ENCODE measurements at regions of chrX and their contacts with region 1.

Region 1: DNA sequence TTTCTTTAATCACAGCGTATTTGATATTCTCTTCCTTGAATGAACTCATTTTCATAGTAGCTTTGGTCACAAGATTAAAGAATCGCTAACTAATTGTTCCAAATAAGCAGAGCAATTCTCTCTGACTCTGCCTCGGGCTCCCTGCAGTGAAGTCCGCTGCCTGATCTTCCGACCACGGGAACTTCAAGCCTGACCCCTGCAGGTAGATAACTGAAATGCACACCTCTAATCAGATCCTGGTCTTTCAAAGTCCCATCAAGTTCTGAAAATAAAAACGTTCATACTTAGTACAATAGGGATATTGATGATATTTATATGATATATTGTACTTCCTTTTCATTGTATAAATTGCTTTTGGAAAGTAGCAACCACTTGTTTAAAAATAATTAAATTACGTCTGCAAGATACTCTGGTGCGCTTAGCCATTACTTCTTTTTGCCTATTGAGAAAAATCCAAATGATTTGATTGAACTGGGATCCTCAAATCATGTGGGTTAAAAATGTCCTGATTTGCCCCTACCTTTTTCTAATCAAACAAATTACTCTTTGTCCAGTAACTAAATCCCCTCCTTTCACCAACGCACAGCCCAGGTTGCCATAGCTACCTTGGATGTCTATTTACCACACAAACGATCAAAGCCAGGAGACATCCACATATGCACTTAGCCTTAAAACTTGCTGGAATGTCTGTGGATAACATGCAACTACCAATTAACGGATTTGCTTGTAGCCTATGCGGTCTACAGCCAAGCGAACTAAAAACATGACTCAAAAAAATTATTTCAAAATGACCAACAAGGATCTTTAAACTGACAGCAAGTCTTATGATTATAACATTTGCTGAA is 4.2 kb downstream of the MID1 start:
- DNase-seq: peak in 1 of 2 donors; percentile 47
- ATAC-seq: peak; percentile 71
- H3K4me3 ChIP-seq: no peak overlapping the region
- H3K27ac ChIP-seq: no peak overlapping the region
- H3K4me1 ChIP-seq: no peaks in the 10 kb centered on the region
- H3K27me3 ChIP-seq: no peaks in the 10 kb centered on the region

Region 2: DNA sequence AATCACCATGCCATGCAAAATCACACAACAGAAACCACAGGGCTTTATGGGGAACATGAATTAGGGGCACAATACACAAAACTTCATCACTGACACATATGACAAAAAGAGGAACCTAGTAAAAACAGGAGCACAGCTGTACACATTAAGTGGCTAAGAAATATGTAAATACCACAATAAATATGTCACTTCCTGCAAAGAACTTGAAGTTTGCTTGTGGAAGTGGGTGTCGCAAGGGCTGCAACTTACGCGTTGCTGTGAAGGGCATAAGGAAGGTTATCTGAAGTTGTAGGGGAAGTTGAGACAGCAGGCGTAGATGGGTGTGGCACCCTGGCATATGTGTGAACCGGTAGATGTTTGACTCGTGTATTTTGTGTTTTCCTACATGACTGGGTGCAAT is 416.9 kb before region 1 on chrX:
- intact Hi-C with region 1: loop called (anchors 5 kb)
- DNase-seq: peak in 1 of 2 donors; percentile 83
- ATAC-seq: peak; percentile 44
- H3K4me3 ChIP-seq: no peak overlapping the region
- H3K27ac ChIP-seq: no peak overlapping the region
- H3K4me1 ChIP-seq: no peaks in the 10 kb centered on the region
- H3K27me3 ChIP-seq: no peaks in the 10 kb centered on the region

Region 3: GRCh38 chrX:10660171-10660570 is 44.0 kb after region 1 on chrX:
- intact Hi-C with region 1: no loop called
- DNase-seq: no peak
- ATAC-seq: no peak
- H3K4me3 ChIP-seq: no peak overlapping the region
- H3K27ac ChIP-seq: no peak overlapping the region
- H3K4me1 ChIP-seq: peaks cover 0 to 2% of the 10 kb centered on the region in 2 donors
- H3K27me3 ChIP-seq: no peaks in the 10 kb centered on the region

Region 4: GRCh38 chrX:11100281-11101035 is 484.3 kb after region 1 on chrX:
- intact Hi-C with region 1: loop called in 1 of 2 experiments (anchors 5 kb)
- DNase-seq: peak in 1 of 2 donors; percentile 49
- ATAC-seq: no peak
- H3K4me3 ChIP-seq: no peak overlapping the region
- H3K27ac ChIP-seq: peak overlapping the region in 1 of 2 donors; percentile 76
- H3K4me1 ChIP-seq: no peaks in the 10 kb centered on the region
- H3K27me3 ChIP-seq: no peaks in the 10 kb centered on the region

Measured in aorta (tissue), 5 donors.